Activated naive CD4-positive, alpha-beta T cell treated with anti-CD3 and anti-CD28 coated beads for 36 hours (primary cell): ENCODE measurements at regions of chr5 and their contacts with region 1.

Region 1: DNA sequence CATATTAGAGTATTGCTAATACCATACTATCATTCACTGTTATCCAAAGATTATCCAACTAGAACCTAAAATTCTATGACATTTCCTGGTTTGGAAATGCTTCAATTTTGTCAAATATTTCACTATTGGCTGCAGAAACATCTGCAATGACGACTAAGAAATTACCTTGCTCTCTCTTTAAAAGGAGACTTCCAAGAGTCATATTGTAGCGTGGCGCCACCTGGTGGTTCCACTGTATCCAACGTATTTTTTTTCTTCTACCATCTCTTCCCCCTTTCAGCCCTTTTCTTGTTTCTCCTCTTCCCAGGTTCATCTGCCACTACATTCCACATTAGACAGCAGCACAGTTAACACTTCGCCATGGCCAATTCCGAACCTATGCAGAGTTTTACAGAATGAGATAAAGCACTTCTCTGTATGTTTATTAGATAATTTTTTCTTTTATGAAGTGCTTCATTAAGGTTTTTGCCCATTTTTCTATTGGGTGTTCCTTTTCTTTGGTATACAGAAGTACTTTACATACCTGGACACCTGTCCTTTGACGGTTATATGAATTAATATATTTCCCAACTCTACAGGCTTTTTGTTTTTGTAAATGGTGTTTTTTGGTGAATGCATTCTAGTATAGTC is 153.5 kb downstream of the CDC42SE2 start:
- DNase-seq: peak; percentile 95
- H3K4me3 Mint-ChIP-seq: peak overlapping the region; percentile 34
- H3K27ac Mint-ChIP-seq: peak overlapping the region; percentile 81
- H3K4me1 Mint-ChIP-seq: peaks cover 41% of the 10 kb centered on the region
- H3K27me3 Mint-ChIP-seq: no peaks in the 10 kb centered on the region

Region 2: DNA sequence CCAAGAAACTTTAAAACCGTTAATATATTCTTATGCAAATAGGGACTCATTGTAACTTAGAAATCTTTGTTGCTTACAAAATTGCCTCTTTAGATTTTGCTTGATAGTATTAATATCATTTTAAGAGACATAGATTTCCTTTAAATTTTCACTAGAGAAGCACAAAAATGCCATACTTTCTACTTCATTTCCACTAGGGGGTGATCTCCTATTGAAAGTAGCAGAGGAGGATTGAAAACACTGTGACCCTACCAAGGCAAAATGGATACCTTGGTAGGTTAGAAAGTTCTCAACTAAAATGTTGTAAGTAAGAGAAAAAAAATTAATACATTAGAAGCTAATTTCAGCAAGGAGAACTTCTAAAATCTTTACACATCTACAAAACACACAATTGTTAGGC is 1308.2 kb before region 1 on chr5:
- CTCF ChIA-PET with region 1: no interaction called
- intact Hi-C with region 1: loop called (anchors 5 kb)
- DNase-seq: no peak
- H3K4me3 Mint-ChIP-seq: no peak overlapping the region
- H3K27ac Mint-ChIP-seq: no peak overlapping the region
- H3K4me1 Mint-ChIP-seq: peaks cover 6% of the 10 kb centered on the region
- H3K27me3 Mint-ChIP-seq: no peaks in the 10 kb centered on the region

Region 3: DNA sequence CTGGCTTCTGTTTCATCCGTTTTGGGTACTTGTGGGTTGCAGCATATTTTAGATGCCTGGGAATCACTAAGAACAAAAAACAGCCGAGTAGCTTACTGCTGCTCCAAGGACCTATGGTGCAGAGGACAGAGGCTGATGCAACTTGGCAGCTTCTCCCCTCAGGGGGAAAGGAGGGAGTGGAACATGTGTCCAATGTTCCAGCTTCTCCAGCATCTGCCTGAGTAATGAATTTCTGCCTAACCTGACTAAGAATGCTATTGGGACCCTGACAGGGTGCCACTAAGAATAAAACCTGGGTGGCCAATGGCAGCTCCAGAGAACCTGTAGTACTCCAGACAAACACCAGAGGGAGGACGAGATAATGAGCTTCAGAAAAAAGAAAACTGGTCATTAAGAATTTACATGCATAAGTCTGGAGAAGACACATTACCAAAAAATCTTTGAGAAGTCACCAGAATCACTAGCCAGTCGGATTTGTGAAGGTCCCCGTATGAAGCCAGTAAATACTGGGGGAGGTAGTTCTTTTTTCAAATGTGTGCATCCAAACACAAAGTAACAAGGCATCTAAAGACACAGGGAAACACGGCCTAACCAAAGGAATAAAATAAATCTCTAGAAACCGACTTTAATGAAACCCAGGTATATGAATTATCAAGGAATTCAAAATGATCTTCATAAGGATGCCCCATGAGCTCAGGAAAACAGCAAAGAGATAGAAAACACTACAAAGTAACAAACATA is 545.8 kb before region 1 on chr5:
- CTCF ChIA-PET with region 1: interaction called, 4 read pairs
- intact Hi-C with region 1: loop called (anchors 1 kb)
- DNase-seq: peak; percentile 53
- H3K4me3 Mint-ChIP-seq: no peak overlapping the region
- H3K27ac Mint-ChIP-seq: no peak overlapping the region
- H3K4me1 Mint-ChIP-seq: no peaks in the 10 kb centered on the region
- H3K27me3 Mint-ChIP-seq: no peaks in the 10 kb centered on the region

Region 4: GRCh38 chr5:131109540-131110255 is 307.7 kb before region 1 on chr5:
- CTCF ChIA-PET with region 1: interaction called, 3 read pairs
- intact Hi-C with region 1: loop called (anchors 1 kb)
- DNase-seq: peak; percentile 54
- H3K4me3 Mint-ChIP-seq: no peak overlapping the region
- H3K27ac Mint-ChIP-seq: no peak overlapping the region
- H3K4me1 Mint-ChIP-seq: peaks cover 6% of the 10 kb centered on the region
- H3K27me3 Mint-ChIP-seq: no peaks in the 10 kb centered on the region

Region 5: GRCh38 chr5:131328536-131329285 is 88.6 kb before region 1 on chr5:
- CTCF ChIA-PET with region 1: no interaction called
- intact Hi-C with region 1: no loop called
- DNase-seq: no peak
- H3K4me3 Mint-ChIP-seq: no peak overlapping the region
- H3K27ac Mint-ChIP-seq: peak overlapping the region; percentile 64
- H3K4me1 Mint-ChIP-seq: peaks cover 64% of the 10 kb centered on the region
- H3K27me3 Mint-ChIP-seq: no peaks in the 10 kb centered on the region

Region 6: GRCh38 chr5:131357739-131358561 is 59.4 kb before region 1 on chr5:
- CTCF ChIA-PET with region 1: no interaction called
- intact Hi-C with region 1: loop called (anchors 2 kb)
- DNase-seq: peak; percentile 67
- H3K4me3 Mint-ChIP-seq: peak overlapping the region; percentile 54
- H3K27ac Mint-ChIP-seq: peak overlapping the region; percentile 91
- H3K4me1 Mint-ChIP-seq: peaks cover 67% of the 10 kb centered on the region
- H3K27me3 Mint-ChIP-seq: no peaks in the 10 kb centered on the region

Region 7: DNA sequence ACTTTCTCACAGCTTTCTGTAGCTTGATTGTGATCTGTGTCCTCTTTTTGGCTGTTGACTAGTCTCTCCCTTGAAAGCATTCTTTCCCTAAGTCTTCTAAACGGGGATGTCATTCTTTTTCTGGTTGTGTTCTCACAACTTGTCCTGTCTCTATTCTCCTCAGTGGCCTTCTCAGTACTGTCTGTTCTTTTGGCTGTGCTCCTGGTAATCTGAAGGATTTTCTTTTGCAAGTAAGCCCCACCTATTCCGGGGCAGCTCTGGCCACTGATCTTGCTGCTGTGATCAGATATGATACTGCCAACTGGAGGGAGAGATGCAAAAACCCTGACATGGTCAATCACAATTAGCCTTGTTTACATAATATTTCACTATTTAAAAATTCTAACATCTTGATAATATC is 18.7 kb after region 1 on chr5:
- CTCF ChIA-PET with region 1: no interaction called
- intact Hi-C with region 1: no loop called
- DNase-seq: no peak
- H3K4me3 Mint-ChIP-seq: no peak overlapping the region
- H3K27ac Mint-ChIP-seq: no peak overlapping the region
- H3K4me1 Mint-ChIP-seq: no peaks in the 10 kb centered on the region
- H3K27me3 Mint-ChIP-seq: no peaks in the 10 kb centered on the region

Region 8: DNA sequence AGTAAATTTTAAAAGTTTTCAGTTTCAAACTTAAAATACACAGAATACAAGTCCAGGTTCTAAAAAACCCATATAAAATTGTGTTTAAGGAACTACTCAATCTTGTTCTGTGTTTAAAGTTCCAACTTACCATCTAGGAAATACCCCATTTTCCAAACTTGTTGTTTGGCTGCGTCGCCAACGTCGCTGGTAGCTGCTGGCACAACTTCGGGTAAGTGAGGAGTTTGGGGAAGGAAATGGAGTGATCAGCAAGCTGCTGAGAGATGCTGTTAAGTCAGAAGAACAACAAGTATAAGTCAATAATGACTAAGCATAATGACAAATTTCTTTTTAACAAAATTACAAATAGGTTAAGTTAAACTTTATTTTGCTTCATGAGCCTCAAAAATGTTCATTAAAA is 288.9 kb after region 1 on chr5:
- CTCF ChIA-PET with region 1: no interaction called
- intact Hi-C with region 1: no loop called
- DNase-seq: no peak
- H3K4me3 Mint-ChIP-seq: no peak overlapping the region
- H3K27ac Mint-ChIP-seq: no peak overlapping the region
- H3K4me1 Mint-ChIP-seq: peaks cover 4% of the 10 kb centered on the region
- H3K27me3 Mint-ChIP-seq: no peaks in the 10 kb centered on the region